ENCODE measurements at regions of chr1 and their contacts with region 1.

Region 1: GRCh38 chr1:16904560-16905111 is 8.9 kb downstream of the RNU1-2 start:
- DNase-seq: peak; percentile 97 to 100 (median 99)
- ATAC-seq: peak; percentile 95
- H3K4me3 ChIP-seq: peak overlapping the region; percentile 69
- H3K4me3 Mint-ChIP-seq: no peak overlapping the region
- H3K27ac ChIP-seq: peak overlapping the region; percentile 98
- H3K27ac Mint-ChIP-seq: no peak overlapping the region
- H3K4me1 ChIP-seq: peaks cover 11 to 25% of the 10 kb centered on the region in 2 donors
- H3K4me1 Mint-ChIP-seq: peaks cover 26 to 51% (median 38%) of the 10 kb centered on the region in 7 donors
- H3K27me3 ChIP-seq: no peaks in the 10 kb centered on the region
- H3K27me3 Mint-ChIP-seq: peaks cover 0 to 4% (median 0%) of the 10 kb centered on the region in 5 donors

Region 2: DNA sequence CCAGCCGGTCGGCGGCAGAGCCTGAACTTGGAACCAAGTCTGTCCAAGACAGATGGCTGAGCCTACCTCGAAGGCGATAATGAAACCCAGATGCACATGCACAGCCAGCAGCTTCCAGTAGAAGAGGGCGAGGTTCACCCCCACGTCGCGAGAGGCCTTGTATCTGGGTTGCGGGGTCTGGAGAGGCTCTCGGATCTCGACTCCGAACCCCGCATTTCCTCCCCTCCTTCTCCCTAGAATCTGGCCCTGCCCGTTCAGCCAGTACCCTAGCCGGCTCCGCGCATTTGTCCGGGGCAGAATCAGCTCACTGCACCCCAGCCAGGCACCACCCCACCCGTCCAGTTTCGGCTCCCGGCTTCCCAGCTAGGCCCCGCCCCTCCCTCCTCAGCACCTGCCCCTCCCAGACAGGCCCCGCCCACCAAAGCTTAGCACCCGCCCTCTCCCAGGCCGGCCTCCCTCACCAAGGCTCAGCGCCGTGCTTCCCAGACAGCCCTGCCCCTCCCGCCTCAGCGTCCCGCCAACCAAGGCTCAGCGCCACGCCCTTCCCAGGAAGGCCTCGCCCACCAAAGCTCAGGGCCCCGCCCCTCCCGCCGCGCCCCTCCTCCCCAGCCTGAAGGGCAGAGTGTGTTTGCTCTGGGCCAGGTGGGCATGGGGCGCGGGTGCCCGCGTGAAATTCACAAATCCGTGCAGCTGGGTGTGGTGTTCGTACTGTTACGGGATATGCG is 687.4 kb before region 1 on chr1:
- CTCF ChIA-PET with region 1: no interaction called
- POLR2A ChIA-PET with region 1: no interaction called
- intact Hi-C with region 1: no loop called
- DNase-seq: peak; percentile 80 to 94 (median 89)
- ATAC-seq: peak; percentile 99
- H3K4me3 ChIP-seq: peak overlapping the region; percentile 67
- H3K4me3 Mint-ChIP-seq: peak overlapping the region; percentile 81 to 91 (median 88)
- H3K27ac ChIP-seq: peak overlapping the region; percentile 54
- H3K27ac Mint-ChIP-seq: peak overlapping the region in 8 of 9 donors; percentile 33 to 82 (median 68)
- H3K4me1 ChIP-seq: peaks cover 0 to 6% of the 10 kb centered on the region in 2 donors
- H3K4me1 Mint-ChIP-seq: peaks cover 9 to 30% (median 23%) of the 10 kb centered on the region in 7 donors
- H3K27me3 ChIP-seq: no peaks in the 10 kb centered on the region
- H3K27me3 Mint-ChIP-seq: peaks cover 0 to 11% (median 0%) of the 10 kb centered on the region in 5 donors

Region 3: GRCh38 chr1:16644193-16644481 is 260.5 kb before region 1 on chr1:
- CTCF ChIA-PET with region 1: no interaction called
- POLR2A ChIA-PET with region 1: interaction called, 13 read pairs
- intact Hi-C with region 1: no loop called
- DNase-seq: no peak
- ATAC-seq: peak; percentile 43
- H3K4me3 ChIP-seq: peak overlapping the region; percentile 89
- H3K4me3 Mint-ChIP-seq: no peak overlapping the region
- H3K27ac ChIP-seq: peak overlapping the region; percentile 80
- H3K27ac Mint-ChIP-seq: no peak overlapping the region
- H3K4me1 ChIP-seq: peaks cover 21 to 27% of the 10 kb centered on the region in 2 donors
- H3K4me1 Mint-ChIP-seq: peaks cover 0 to 3% (median 0%) of the 10 kb centered on the region in 7 donors
- H3K27me3 ChIP-seq: no peaks in the 10 kb centered on the region
- H3K27me3 Mint-ChIP-seq: peaks cover 0 to 9% (median 0%) of the 10 kb centered on the region in 5 donors

Region 4: GRCh38 chr1:16888860-16889816 is 15.5 kb before region 1 on chr1:
- CTCF ChIA-PET with region 1: no interaction called
- POLR2A ChIA-PET with region 1: interaction called, 72 read pairs
- intact Hi-C with region 1: no loop called
- DNase-seq: peak in 8 of 9 donors; percentile 35 to 67 (median 56)
- ATAC-seq: peak; percentile 77
- H3K4me3 ChIP-seq: peak overlapping the region; percentile 79
- H3K4me3 Mint-ChIP-seq: peak overlapping the region; percentile 89 to 99 (median 96)
- H3K27ac ChIP-seq: peak overlapping the region; percentile 70
- H3K27ac Mint-ChIP-seq: peak overlapping the region in 8 of 9 donors; percentile 91 to 98 (median 96)
- H3K4me1 ChIP-seq: peaks cover 4 to 9% of the 10 kb centered on the region in 2 donors
- H3K4me1 Mint-ChIP-seq: peaks cover 7 to 34% (median 28%) of the 10 kb centered on the region in 7 donors
- H3K27me3 ChIP-seq: no peaks in the 10 kb centered on the region
- H3K27me3 Mint-ChIP-seq: peaks cover 0 to 88% (median 0%) of the 10 kb centered on the region in 5 donors

Region 5: GRCh38 chr1:16921391-16922185 is 17.0 kb after region 1 on chr1 and contains the start of gene CROCC:
- CTCF ChIA-PET with region 1: no interaction called
- POLR2A ChIA-PET with region 1: interaction called, 12 read pairs
- intact Hi-C with region 1: no loop called
- DNase-seq: peak in 6 of 9 donors; percentile 27 to 50 (median 38)
- ATAC-seq: peak; percentile 74
- H3K4me3 ChIP-seq: peak within 1 kb of the TSS; percentile 32
- H3K4me3 Mint-ChIP-seq: peak within 1 kb of the TSS; percentile 47 to 79 (median 70)
- H3K27ac ChIP-seq: peak within 1 kb of the TSS; percentile 15
- H3K27ac Mint-ChIP-seq: peak within 1 kb of the TSS in 5 of 9 donors; percentile 25 to 74 (median 46)
- H3K4me1 ChIP-seq: peaks cover 10 to 13% of the 10 kb centered on the region in 2 donors
- H3K4me1 Mint-ChIP-seq: peaks cover 13 to 53% (median 32%) of the 10 kb centered on the region in 7 donors
- H3K27me3 ChIP-seq: no peaks in the 10 kb centered on the region
- H3K27me3 Mint-ChIP-seq: no peaks in the 10 kb centered on the region
- total RNA-seq, gene CROCC: 33.8 to 84.8 (median 62.7) TPM

Region 6: DNA sequence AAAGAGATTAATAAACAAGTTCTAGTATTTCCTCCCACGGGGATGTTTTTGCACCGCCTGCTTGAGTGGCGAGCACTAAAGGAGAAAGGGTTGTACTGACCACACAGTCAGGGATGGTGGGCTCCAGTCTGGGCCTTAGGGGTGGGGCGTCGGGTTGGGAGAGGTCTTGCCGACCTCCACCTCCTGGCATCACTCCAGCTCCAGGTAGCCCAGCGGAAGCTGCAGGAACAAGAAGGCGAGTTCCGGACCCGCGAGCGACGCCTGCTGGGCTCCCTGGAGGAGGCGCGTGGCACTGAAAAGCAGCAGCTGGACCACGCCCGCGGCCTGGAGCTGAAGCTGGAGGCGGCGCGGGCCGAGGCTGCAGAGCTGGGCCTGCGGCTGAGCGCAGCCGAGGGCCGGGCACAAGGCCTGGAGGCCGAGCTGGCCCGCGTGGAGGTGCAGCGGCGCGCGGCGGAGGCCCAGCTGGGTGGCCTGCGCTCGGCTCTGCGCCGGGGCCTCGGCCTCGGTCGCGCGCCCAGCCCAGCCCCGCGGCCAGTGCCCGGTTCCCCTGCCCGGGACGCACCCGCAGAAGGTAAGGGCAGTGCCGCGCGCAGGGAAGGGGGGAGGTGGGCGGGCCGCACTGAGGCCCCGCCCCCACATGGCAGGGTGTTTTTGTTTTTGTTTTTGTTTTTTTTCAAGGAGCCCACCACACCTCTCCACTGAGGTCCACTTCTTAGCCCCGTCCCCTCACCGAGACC is 56.1 kb after region 1 on chr1:
- CTCF ChIA-PET with region 1: interaction called, 4 read pairs
- POLR2A ChIA-PET with region 1: interaction called, 13 read pairs
- intact Hi-C with region 1: loop called in 1 of 2 experiments (anchors 2 kb)
- DNase-seq: peak; percentile 50 to 83 (median 66)
- ATAC-seq: peak; percentile 92
- H3K4me3 ChIP-seq: peak overlapping the region; percentile 40
- H3K4me3 Mint-ChIP-seq: peak overlapping the region; percentile 71 to 87 (median 82)
- H3K27ac ChIP-seq: peak overlapping the region; percentile 48
- H3K27ac Mint-ChIP-seq: peak overlapping the region; percentile 14 to 83 (median 68)
- H3K4me1 ChIP-seq: peaks cover 0 to 4% of the 10 kb centered on the region in 2 donors
- H3K4me1 Mint-ChIP-seq: peaks cover 4 to 14% (median 10%) of the 10 kb centered on the region in 7 donors
- H3K27me3 ChIP-seq: no peaks in the 10 kb centered on the region
- H3K27me3 Mint-ChIP-seq: no peaks in the 10 kb centered on the region

Region 7: GRCh38 chr1:17053685-17054410 is 149.2 kb after region 1 on chr1 and contains the start of gene SDHB:
- CTCF ChIA-PET with region 1: no interaction called
- POLR2A ChIA-PET with region 1: interaction called, 4 read pairs
- intact Hi-C with region 1: loop called (anchors 1 to 2 kb)
- DNase-seq: peak; percentile 97 to 100 (median 100)
- ATAC-seq: peak; percentile 99
- H3K4me3 ChIP-seq: peak within 1 kb of the TSS; percentile 77
- H3K4me3 Mint-ChIP-seq: peak within 1 kb of the TSS; percentile 87 to 99 (median 98)
- H3K27ac ChIP-seq: peak within 1 kb of the TSS; percentile 81
- H3K27ac Mint-ChIP-seq: peak within 1 kb of the TSS; percentile 94 to 99 (median 97)
- H3K4me1 ChIP-seq: peaks cover 13 to 14% of the 10 kb centered on the region in 2 donors
- H3K4me1 Mint-ChIP-seq: peaks cover 8 to 39% (median 33%) of the 10 kb centered on the region in 7 donors
- H3K27me3 ChIP-seq: no peaks in the 10 kb centered on the region
- H3K27me3 Mint-ChIP-seq: peaks cover 0 to 7% (median 6%) of the 10 kb centered on the region in 5 donors
- total RNA-seq, gene SDHB: 53.3 to 81.3 (median 61.1) TPM

Measured in naive thymus-derived CD4-positive, alpha-beta T cell (primary cell).